Keratinocyte (primary cell): ENCODE measurements at regions of chr7 and their contacts with region 1.

Region 1: GRCh38 chr7:116524609-116525297 is at the start of gene CAV1:
- DNase-seq: no peak
- H3K4me3 ChIP-seq: peak within 1 kb of the TSS; percentile 73 to 98 (median 96)
- H3K27ac ChIP-seq: peak within 1 kb of the TSS; percentile 98
- H3K4me1 ChIP-seq: peaks cover 74% of the 10 kb centered on the region
- H3K27me3 ChIP-seq: no peaks in the 10 kb centered on the region
- CTCF ChIP-seq: peak in 2 of 3 experiments; percentile 28 to 35
- polyA plus RNA-seq, gene CAV1: 2,867 to 2,979 TPM (median 2,905 TPM) in 3 replicates

Region 2: GRCh38 chr7:116258734-116259133 is 266.0 kb before region 1 on chr7:
- dilution Hi-C with region 1: loop called (anchors 25 kb)
- DNase-seq: no peak
- H3K4me3 ChIP-seq: no peak overlapping the region
- H3K27ac ChIP-seq: peak overlapping the region; percentile 83
- H3K4me1 ChIP-seq: peaks cover 17% of the 10 kb centered on the region
- H3K27me3 ChIP-seq: no peaks in the 10 kb centered on the region
- CTCF ChIP-seq: peak; percentile 34 to 59 (median 44)